GM12878 (cell line): ENCODE measurements at regions of chr2 and their contacts with region 1.

Region 1: DNA sequence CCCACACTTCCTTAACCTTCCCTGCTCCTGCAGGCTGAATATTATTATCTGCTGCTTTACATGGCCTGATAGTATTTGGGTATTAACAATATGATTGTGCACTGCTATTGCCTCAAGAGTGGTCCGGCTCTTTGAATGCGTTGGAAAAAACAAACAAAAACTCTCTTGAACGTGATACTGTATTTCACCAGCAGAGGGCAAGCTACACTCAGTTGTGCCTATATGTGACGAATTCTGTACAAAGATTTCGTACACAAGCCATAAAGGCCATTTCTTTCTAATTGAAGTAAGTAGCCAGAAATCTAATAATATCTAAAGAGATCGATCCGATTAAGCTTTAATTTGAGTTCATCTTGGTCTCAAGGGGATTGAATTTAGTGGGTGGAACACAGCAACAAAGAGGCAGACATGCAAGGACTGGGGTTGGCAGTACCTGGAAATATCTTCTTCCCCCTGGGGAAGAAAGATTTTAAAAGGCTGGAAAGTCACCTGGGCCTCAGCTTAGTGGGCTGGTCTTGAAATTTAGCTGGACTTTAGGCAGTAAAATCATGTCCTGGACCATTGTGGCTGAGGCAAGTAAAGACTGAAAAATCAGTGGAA is 49.3 kb upstream of the RAB6D start:
- DNase-seq: peak; percentile 15
- ATAC-seq: peak; percentile 81
- H3K4me3 ChIP-seq: no peak overlapping the region
- H3K27ac ChIP-seq: no peak overlapping the region
- H3K4me1 ChIP-seq: no peaks in the 10 kb centered on the region
- H3K27me3 ChIP-seq: peaks cover 1 to 3% of the 10 kb centered on the region in 2 experiments; a peak in 1 of 4 replicates
- CTCF ChIP-seq: peak; percentile 65 to 87 (median 69)
- EP300 ChIP-seq: no peak
- POLR2A ChIP-seq: no peak
- RAD21 ChIP-seq: peak; percentile 91

Region 2: DNA sequence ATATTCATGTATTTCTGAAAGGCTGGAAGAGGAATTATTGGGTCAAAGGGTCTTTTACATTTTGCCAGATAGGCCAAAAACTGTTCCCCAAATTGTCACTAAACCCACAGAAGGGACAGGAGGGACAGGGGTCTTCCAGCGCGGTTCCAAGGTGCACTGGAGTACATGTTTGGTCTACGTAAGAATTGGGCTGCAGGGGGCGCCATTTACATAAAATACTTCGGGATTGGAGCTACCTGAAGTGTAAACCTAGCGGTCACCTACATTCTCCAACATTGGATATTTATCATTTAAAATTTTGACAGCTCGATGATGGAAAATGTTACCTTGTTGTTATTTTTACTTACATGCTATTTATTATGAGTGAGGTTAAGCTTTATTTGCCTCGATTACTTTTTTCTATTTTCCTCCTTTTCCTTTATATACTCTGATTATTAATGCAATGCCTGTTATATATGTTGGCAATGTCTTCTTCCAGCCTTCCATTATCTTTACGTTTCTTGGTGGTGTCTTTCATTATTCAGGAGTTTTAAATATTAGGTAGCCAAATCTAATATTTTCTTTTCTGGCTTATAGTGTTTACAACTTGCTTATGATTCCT is 1476.8 kb before region 1 on chr2:
- CTCF ChIA-PET with region 1: interaction called, 36 read pairs
- POLR2A ChIA-PET with region 1: no interaction called
- RAD21 ChIA-PET with region 1: interaction called, 9 read pairs
- SMC1A ChIA-PET with region 1: interaction called, 20 read pairs
- in situ Hi-C with region 1: loop called (anchors 5 kb)
- intact Hi-C with region 1: loop called (anchors 1 kb)
- DNase-seq: no peak
- ATAC-seq: peak; percentile 72
- H3K4me3 ChIP-seq: no peak overlapping the region
- H3K27ac ChIP-seq: no peak overlapping the region
- H3K4me1 ChIP-seq: no peaks in the 10 kb centered on the region
- H3K27me3 ChIP-seq: no peaks in the 10 kb centered on the region; a peak in 1 of 4 replicates
- CTCF ChIP-seq: peak; percentile 36 to 48 (median 42); a peak in 5 of 6 replicates
- EP300 ChIP-seq: no peak
- POLR2A ChIP-seq: no peak
- RAD21 ChIP-seq: peak; percentile 57

Region 3: GRCh38 chr2:131132729-131133128 is 280.5 kb before region 1 on chr2:
- CTCF ChIA-PET with region 1: no interaction called
- POLR2A ChIA-PET with region 1: no interaction called
- RAD21 ChIA-PET with region 1: no interaction called
- SMC1A ChIA-PET with region 1: no interaction called
- in situ Hi-C with region 1: no loop called
- intact Hi-C with region 1: no loop called
- DNase-seq: no peak
- ATAC-seq: no peak
- H3K4me3 ChIP-seq: no peak overlapping the region
- H3K27ac ChIP-seq: no peak overlapping the region
- H3K4me1 ChIP-seq: no peaks in the 10 kb centered on the region; the same call in 1 of the 2 replicates
- H3K27me3 ChIP-seq: no peaks in the 10 kb centered on the region
- CTCF ChIP-seq: no peak
- EP300 ChIP-seq: no peak
- POLR2A ChIP-seq: no peak
- RAD21 ChIP-seq: no peak

Region 4: GRCh38 chr2:131154071-131154531 is 259.1 kb before region 1 on chr2:
- CTCF ChIA-PET with region 1: interaction called, 4 read pairs
- POLR2A ChIA-PET with region 1: no interaction called
- RAD21 ChIA-PET with region 1: no interaction called
- SMC1A ChIA-PET with region 1: interaction called, 3 read pairs
- in situ Hi-C with region 1: no loop called
- intact Hi-C with region 1: loop called (anchors 5 kb)
- DNase-seq: peak; percentile 24
- ATAC-seq: peak; percentile 95
- H3K4me3 ChIP-seq: no peak overlapping the region
- H3K27ac ChIP-seq: no peak overlapping the region
- H3K4me1 ChIP-seq: peaks cover 10% of the 10 kb centered on the region
- H3K27me3 ChIP-seq: no peaks in the 10 kb centered on the region
- CTCF ChIP-seq: peak; percentile 90 to 97 (median 90); a peak in 5 of 6 replicates
- EP300 ChIP-seq: no peak
- POLR2A ChIP-seq: no peak
- RAD21 ChIP-seq: peak; percentile 87

Region 5: DNA sequence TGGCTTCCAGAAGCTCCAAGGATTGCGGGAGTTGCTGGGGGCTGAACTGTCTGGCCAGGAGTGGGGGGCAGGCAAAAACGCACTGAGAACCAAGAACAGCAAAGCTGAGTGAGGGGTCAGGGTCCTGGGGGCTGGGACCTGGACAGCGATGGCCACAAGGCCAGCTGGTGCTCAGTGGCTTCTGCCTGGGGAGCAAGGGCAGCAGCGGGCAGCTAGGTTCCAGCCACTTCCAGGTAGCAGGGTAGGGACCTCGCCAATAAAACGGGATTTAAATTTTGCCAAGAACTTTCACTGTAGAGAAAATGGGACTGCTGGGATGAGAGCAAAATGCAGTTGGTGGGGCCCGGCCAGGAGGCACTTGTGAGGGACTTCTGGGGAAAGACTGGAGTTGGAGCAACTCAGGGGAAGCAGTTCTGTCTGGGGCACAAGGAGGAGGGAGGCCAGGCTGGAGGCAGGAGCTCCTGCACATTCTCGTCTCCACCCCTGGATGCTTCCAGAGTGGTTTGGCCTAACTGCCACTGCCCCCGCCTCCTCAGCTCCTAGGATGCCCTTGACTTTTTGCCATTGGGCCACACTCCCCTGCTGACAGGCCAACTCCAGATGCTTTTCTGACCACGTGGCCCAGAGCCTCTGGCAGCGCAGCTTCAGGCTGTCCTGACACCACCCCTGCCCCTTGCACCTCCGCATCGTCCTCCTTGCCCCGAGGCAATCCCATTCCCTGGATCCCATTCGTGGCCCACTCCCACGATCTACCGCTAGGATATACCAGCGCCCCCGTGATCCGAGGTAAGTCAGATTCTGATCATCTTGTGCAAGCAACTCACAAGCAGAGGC is 108.9 kb after region 1 on chr2:
- CTCF ChIA-PET with region 1: no interaction called
- POLR2A ChIA-PET with region 1: no interaction called
- RAD21 ChIA-PET with region 1: no interaction called
- SMC1A ChIA-PET with region 1: no interaction called
- in situ Hi-C with region 1: no loop called
- intact Hi-C with region 1: loop called (anchors 5 kb)
- DNase-seq: no peak
- ATAC-seq: peak; percentile 11; the same call in 1 of the 3 replicates
- H3K4me3 ChIP-seq: no peak overlapping the region
- H3K27ac ChIP-seq: no peak overlapping the region
- H3K4me1 ChIP-seq: no peaks in the 10 kb centered on the region
- H3K27me3 ChIP-seq: no peaks in the 10 kb centered on the region
- CTCF ChIP-seq: no peak
- EP300 ChIP-seq: no peak
- POLR2A ChIP-seq: no peak; the same call in 1 of the 2 replicates
- RAD21 ChIP-seq: no peak

Region 6: DNA sequence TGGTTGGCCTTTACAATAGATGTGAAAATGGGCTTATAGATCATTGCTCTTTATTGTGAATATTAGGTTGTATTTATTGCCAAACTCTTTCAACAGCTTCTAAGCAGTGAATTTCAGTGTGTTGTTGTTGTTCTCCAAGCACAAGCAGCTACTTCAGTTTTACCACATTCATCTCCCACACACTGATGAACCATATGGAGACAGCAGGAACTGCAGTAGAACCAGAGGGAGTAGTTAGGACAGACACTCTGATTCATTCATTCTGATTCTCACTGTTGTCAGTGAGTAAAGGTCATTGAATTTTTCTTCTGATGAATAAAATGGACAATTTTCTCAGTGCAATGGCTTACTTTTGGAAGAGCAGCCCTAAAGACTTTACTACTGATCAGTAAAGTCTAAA is 154.6 kb after region 1 on chr2:
- CTCF ChIA-PET with region 1: no interaction called
- POLR2A ChIA-PET with region 1: no interaction called
- RAD21 ChIA-PET with region 1: no interaction called
- SMC1A ChIA-PET with region 1: no interaction called
- in situ Hi-C with region 1: no loop called
- intact Hi-C with region 1: no loop called
- DNase-seq: no peak
- ATAC-seq: peak; percentile 18; the same call in 1 of the 3 replicates
- H3K4me3 ChIP-seq: no peak overlapping the region
- H3K27ac ChIP-seq: no peak overlapping the region
- H3K4me1 ChIP-seq: no peaks in the 10 kb centered on the region
- H3K27me3 ChIP-seq: no peaks in the 10 kb centered on the region
- CTCF ChIP-seq: no peak
- EP300 ChIP-seq: no peak
- POLR2A ChIP-seq: no peak
- RAD21 ChIP-seq: no peak

Region 7: GRCh38 chr2:131801210-131801744 is 388.0 kb after region 1 on chr2:
- CTCF ChIA-PET with region 1: no interaction called
- POLR2A ChIA-PET with region 1: no interaction called
- RAD21 ChIA-PET with region 1: no interaction called
- SMC1A ChIA-PET with region 1: no interaction called
- in situ Hi-C with region 1: loop called (anchors 25 kb)
- intact Hi-C with region 1: loop called (anchors 2 kb)
- DNase-seq: no peak
- ATAC-seq: no peak
- H3K4me3 ChIP-seq: no peak overlapping the region
- H3K27ac ChIP-seq: no peak overlapping the region
- H3K4me1 ChIP-seq: no peaks in the 10 kb centered on the region
- H3K27me3 ChIP-seq: no peaks in the 10 kb centered on the region; a peak in 1 of 4 replicates
- CTCF ChIP-seq: no peak
- EP300 ChIP-seq: no peak
- POLR2A ChIP-seq: no peak
- RAD21 ChIP-seq: no peak